Sigmoid colon (tissue), 7 donors: ENCODE measurements at regions of chr1 and their contacts with region 1.

Region 1: DNA sequence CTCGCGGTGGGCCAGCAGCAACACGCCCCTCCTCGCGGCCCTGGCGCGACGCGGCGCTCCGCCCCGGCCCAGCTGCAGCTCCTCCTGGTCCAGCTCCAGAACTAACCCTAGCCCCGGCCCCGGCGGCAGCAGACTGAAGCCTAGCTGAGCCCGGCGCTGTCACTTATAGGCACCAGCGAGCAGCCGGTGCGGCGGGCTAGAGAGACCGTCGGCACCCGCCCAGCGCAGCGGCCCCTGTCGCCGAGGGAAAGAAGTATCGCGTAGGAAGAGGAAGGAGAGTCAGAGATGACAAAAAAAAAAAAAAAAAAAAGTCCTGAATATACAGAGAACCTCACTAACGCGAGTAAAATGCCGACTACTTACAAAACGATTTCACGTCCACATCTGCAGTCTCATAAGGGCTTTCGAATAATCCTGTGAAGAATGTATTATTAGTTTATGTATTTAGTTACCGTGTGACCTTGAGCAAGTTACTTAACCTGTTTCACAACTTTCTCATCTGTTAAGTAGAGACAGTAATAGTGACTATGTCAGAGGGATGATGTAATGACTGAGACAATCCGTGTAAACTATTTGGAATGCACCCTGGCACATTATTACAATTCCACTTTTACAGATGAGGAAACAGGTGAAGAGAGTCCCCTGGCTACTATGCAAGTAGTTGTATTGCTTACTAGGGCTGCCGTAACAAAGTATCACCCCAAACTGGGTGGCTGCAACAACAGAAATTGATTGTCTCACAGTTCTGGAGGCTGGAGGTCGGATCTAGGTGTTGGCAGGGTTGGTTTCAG is at the start of gene SLC9A1:
- DNase-seq: peak; percentile 98
- H3K4me3 ChIP-seq: peak within 1 kb of the TSS; percentile 48 to 90 (median 83)
- H3K27ac ChIP-seq: peak within 1 kb of the TSS; percentile 79 to 96 (median 94)
- H3K4me1 ChIP-seq: peaks cover 0 to 51% (median 44%) of the 10 kb centered on the region in 4 donors
- H3K27me3 ChIP-seq: no peaks in the 10 kb centered on the region
- CTCF ChIP-seq: peak; percentile 51 to 73 (median 66)
- EP300 ChIP-seq: peak in 1 of 4 donors; percentile 38
- POLR2A ChIP-seq: peak; percentile 91 to 94
- total RNA-seq, gene SLC9A1: 11.4 to 25.2 (median 13.3) TPM

Region 2: DNA sequence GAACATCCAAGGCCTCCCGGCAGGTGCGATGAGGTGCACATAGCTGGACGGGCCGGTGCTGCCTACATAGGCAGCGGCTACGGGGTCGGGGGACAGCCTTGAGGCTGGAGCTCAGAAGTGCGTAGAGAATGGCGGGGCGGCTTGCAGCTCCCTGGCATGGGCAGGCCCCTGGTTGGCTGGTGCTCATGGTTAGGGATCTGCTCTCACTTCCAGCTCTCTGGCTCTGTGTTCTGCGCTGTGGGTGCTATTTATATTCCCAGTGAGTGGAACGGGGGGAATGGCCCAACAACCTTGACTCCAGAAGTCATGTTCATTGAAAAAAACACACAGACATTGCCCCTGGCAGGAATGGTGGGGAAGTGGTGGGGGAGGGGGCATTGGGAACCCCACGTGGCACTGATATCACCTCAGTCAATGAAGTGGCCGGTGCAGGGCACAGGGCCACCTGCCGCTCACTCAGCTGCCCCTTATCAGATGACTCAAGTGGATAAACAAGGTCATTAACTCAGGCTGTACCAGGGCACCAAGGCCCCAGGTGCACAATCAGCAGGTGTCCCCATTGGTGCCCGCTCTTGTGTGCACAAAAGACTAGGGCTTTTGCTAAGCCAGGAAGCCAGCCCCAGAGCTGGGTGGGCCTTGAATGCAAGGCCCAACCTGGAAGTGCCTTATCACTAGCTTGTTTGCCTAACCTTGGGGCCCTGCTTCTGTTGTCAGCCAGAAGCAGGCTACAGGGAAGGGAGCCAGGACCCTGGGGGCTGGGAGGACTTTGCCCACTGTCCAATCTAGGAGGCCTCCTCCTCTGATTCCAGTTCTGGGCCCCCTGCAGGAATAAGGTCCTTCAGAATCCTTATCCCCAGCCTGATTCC is 241.2 kb before region 1 on chr1 and contains the start of gene NR0B2:
- intact Hi-C with region 1: no loop called
- DNase-seq: no peak
- H3K4me3 ChIP-seq: no peak within 1 kb of the TSS
- H3K27ac ChIP-seq: no peak within 1 kb of the TSS
- H3K4me1 ChIP-seq: no peaks in the 10 kb centered on the region
- H3K27me3 ChIP-seq: no peaks in the 10 kb centered on the region
- CTCF ChIP-seq: no peak
- EP300 ChIP-seq: no peak
- POLR2A ChIP-seq: no peak
- total RNA-seq, gene NR0B2: not detected

Region 3: GRCh38 chr1:26986658-26987057 is 168.5 kb before region 1 on chr1:
- intact Hi-C with region 1: no loop called
- DNase-seq: no peak
- H3K4me3 ChIP-seq: no peak overlapping the region
- H3K27ac ChIP-seq: no peak overlapping the region
- H3K4me1 ChIP-seq: no peaks in the 10 kb centered on the region
- H3K27me3 ChIP-seq: peaks cover 0 to 8% (median 0%) of the 10 kb centered on the region in 3 donors
- CTCF ChIP-seq: no peak
- EP300 ChIP-seq: no peak
- POLR2A ChIP-seq: no peak

Region 4: GRCh38 chr1:26999440-26999987 is 155.7 kb before region 1 on chr1:
- intact Hi-C with region 1: loop called (anchors 2 kb)
- DNase-seq: peak; percentile 96
- H3K4me3 ChIP-seq: no peak overlapping the region
- H3K27ac ChIP-seq: peak overlapping the region; percentile 91 to 98 (median 97)
- H3K4me1 ChIP-seq: peaks cover 0 to 97% (median 94%) of the 10 kb centered on the region in 4 donors
- H3K27me3 ChIP-seq: no peaks in the 10 kb centered on the region
- CTCF ChIP-seq: no peak
- EP300 ChIP-seq: peak in 3 of 4 donors; percentile 88 to 96 (median 92)
- POLR2A ChIP-seq: no peak

Region 5: DNA sequence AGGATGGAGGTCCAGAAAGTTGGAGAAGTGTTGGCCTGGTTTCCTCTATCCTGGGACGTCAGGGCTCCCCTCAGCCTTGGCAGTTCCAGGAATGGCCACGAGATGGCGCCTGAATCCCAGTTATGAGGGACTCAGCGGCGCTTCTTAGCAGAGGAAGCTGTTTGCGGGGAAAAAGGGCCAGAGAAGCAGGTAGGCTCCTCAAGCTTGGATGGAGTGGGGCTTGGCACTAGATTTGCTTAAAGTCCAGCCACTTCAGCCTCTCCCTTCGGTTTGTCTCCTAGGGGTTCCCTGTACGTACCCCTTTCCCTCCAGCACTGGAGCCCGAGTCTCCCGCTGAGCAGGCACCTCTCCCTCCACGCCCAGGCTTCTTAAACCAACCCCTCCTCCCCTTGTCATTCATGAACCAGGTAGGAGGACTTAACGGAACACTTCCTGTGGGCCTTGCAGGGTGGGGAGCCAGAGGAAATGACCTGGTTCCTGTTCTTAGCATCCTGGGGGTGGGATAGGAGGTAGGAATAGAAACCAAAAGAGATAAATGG is 110.5 kb before region 1 on chr1:
- intact Hi-C with region 1: loop called (anchors 5 kb)
- DNase-seq: peak; percentile 93
- H3K4me3 ChIP-seq: peak overlapping the region in 3 of 4 donors; percentile 2 to 24 (median 18)
- H3K27ac ChIP-seq: no peak overlapping the region
- H3K4me1 ChIP-seq: peaks cover 0 to 20% (median 13%) of the 10 kb centered on the region in 4 donors
- H3K27me3 ChIP-seq: no peaks in the 10 kb centered on the region
- CTCF ChIP-seq: peak; percentile 95 to 99 (median 97)
- EP300 ChIP-seq: no peak
- POLR2A ChIP-seq: no peak

Region 6: GRCh38 chr1:27102707-27103491 is 52.3 kb before region 1 on chr1:
- intact Hi-C with region 1: loop called (anchors 10 kb)
- DNase-seq: peak; percentile 90
- H3K4me3 ChIP-seq: no peak overlapping the region
- H3K27ac ChIP-seq: no peak overlapping the region
- H3K4me1 ChIP-seq: peaks cover 0 to 25% (median 22%) of the 10 kb centered on the region in 4 donors
- H3K27me3 ChIP-seq: no peaks in the 10 kb centered on the region
- CTCF ChIP-seq: peak; percentile 94 to 99 (median 96)
- EP300 ChIP-seq: no peak
- POLR2A ChIP-seq: no peak

Region 7: DNA sequence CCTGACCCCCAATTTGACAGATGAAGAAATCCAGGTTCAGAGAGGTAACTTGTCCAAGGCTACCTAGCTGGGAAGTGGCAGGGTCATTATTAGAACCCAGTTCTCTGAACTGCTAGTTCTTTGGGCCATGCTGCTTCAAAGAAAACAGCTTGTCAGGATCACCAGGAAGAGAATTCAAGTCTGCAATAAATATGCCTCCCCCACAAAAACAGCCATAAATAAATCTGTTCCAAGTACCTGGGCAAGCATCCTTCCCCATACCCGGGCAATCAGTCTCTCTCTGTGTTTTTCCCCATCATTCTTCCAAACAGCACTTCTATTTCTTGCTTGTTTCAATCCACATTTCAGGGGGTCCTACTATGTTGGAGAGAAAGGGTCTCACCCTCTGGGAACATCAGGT is 34.3 kb before region 1 on chr1:
- intact Hi-C with region 1: loop called (anchors 1 kb)
- DNase-seq: no peak
- H3K4me3 ChIP-seq: no peak overlapping the region
- H3K27ac ChIP-seq: peak overlapping the region; percentile 75 to 83 (median 78)
- H3K4me1 ChIP-seq: peaks cover 0 to 75% (median 72%) of the 10 kb centered on the region in 4 donors
- H3K27me3 ChIP-seq: no peaks in the 10 kb centered on the region
- CTCF ChIP-seq: no peak
- EP300 ChIP-seq: no peak
- POLR2A ChIP-seq: no peak

Region 8: DNA sequence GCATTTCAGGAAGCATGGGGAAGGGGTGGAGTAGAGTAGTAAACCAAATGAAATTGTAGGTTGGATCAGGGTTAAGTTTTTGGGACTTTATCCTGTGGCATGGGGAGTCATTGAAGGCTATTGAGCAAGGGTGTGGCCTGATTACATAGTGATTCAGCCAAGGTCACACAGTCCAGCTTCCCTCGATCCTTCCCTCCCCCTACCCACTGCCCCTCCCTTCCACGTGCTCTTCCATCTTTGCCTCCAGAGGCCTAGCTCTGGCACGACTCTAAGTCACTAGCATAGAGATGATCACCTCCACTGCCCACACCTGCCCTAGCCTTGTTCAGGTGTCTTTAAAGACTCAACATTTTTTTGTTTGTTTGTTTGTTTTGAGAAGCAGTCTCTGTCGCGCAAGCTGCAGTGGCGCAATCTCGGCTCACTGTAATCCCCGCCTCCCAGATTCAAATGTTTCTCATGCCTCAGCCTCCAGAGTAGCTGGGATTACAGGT is 36.9 kb after region 1 on chr1:
- intact Hi-C with region 1: no loop called
- DNase-seq: no peak
- H3K4me3 ChIP-seq: no peak overlapping the region
- H3K27ac ChIP-seq: peak overlapping the region in 1 of 4 donors; percentile 1
- H3K4me1 ChIP-seq: no peaks in the 10 kb centered on the region
- H3K27me3 ChIP-seq: no peaks in the 10 kb centered on the region
- CTCF ChIP-seq: no peak
- EP300 ChIP-seq: no peak
- POLR2A ChIP-seq: no peak

Region 9: DNA sequence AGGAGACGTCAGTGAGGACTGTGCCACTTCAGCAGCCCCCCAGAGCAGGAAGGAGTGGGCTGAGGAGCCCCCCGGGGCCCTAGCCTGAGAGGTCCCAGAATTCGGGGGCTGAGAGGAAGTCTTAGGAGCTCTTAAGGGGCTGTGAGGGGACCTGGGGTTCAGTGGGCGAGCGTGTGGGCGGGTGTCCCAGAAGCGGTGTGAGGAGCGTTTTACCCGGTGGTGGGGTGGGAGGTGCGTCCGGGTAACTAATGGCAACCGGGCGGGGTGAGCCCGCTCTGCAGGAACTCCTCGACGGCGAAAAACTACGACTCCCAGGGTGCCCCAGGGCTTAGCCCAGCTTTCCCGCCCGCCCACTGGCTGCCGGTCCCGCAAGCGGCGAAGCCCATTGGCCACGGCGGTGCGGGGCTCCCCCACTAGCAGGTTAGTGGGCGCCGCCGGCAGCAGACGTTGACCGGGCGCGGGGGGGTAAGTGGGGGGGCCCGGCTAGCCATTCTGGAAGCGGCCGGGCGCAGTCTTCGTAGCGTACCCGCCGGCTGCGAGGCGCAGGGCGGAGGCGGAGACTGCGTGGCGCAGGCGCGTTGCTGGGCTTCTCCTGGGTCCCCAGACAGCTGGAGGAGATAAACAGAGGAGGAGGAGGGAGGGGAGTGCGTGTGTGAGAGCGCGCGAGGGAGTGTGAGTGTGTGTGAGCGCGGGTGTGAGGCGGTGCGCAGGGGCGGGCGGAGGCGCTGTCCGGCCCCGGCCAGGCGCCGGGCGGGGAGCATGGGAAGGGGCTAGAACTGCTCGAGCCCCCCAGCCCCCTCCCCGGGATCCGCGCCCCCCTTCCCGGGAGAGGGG is 79.1 kb after region 1 on chr1 and contains the start of gene WDTC1:
- intact Hi-C with region 1: loop called (anchors 5 kb)
- DNase-seq: peak; percentile 99
- H3K4me3 ChIP-seq: peak within 1 kb of the TSS; percentile 84 to 100 (median 92)
- H3K27ac ChIP-seq: peak within 1 kb of the TSS; percentile 89 to 93 (median 91)
- H3K4me1 ChIP-seq: peaks cover 0 to 27% (median 21%) of the 10 kb centered on the region in 4 donors
- H3K27me3 ChIP-seq: no peaks in the 10 kb centered on the region
- CTCF ChIP-seq: no peak
- EP300 ChIP-seq: no peak
- POLR2A ChIP-seq: peak; percentile 32 to 55
- total RNA-seq, gene WDTC1: 27.5 to 32.4 (median 29.6) TPM